ENCODE measurements at regions of chr7 and their contacts with region 1.

Region 1: DNA sequence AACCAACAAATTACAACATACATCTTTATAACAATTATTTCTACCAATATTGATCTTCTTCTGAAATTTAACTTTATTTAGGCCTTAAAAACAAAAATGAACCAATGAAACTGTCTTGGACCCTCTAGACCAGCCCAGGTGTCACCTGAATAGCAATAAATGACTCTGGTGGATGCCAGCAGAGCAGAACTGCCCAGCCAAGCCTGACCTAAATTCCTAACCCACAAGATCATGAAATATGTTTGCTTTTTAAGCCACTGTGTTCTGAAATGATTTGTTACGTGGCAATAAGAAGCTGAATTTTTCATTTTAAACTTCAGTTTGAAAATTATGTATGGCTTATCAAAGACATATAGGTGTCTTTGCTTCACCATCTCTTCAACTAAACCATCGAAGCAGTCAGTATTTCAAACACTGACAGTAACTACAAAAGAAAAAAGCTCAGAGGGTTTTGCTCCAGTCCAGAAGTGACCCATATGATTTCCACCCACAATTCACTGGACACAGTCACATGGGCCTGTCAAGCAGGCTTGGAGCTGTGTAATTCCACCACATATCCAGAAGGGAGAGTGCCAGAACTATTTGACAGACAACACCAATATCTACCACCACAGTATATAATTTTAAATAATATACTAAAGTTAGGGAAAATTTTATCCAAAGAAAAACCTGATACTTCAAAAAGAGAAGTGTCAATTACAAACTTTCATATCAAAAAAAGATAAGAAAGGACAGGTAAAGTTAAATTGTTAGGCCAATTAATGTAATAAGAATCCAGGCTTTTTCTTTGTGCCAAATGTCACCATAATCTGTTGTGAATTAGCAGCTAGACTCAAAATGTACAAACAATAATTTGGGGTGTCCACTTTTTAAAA is 94.5 kb downstream of the KMT2C start:
- DNase-seq: peak; percentile 67
- ATAC-seq: peak; percentile 94
- H3K4me3 ChIP-seq: no peak overlapping the region
- H3K27ac ChIP-seq: no peak overlapping the region
- H3K4me1 ChIP-seq: no peaks in the 10 kb centered on the region; the same call in 1 of the 2 replicates
- H3K27me3 ChIP-seq: no peaks in the 10 kb centered on the region
- CTCF ChIP-seq: peak; percentile 66

Region 2: GRCh38 chr7:151793531-151793951 is 547.7 kb before region 1 on chr7:
- CTCF ChIA-PET with region 1: no interaction called
- POLR2A ChIA-PET with region 1: no interaction called
- intact Hi-C with region 1: no loop called
- DNase-seq: peak; percentile 11
- ATAC-seq: no peak
- H3K4me3 ChIP-seq: no peak overlapping the region
- H3K27ac ChIP-seq: no peak overlapping the region
- H3K4me1 ChIP-seq: peaks cover 42% of the 10 kb centered on the region
- H3K27me3 ChIP-seq: no peaks in the 10 kb centered on the region
- CTCF ChIP-seq: no peak

Region 3: DNA sequence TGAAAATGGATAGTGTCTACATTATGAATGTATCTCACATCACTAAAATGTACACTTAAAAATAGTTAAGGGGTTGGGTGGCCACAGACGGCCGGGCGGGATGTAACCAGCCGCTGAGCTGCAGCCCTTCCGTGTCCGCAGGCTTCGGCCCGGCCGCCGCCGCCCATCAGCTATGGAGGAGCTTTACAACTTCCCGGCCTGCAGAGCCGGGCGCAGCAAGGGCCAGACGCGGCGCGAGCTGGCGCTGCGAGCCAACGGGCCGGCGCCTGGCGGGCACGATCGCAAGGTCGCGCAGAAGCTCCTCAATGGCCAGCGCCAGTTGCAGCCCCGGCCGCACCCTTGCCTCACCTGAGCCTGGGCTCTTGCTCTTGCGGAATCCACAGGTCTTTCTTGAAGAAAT is 25.4 kb after region 1 on chr7:
- CTCF ChIA-PET with region 1: no interaction called
- POLR2A ChIA-PET with region 1: no interaction called
- intact Hi-C with region 1: no loop called
- DNase-seq: no peak
- ATAC-seq: no peak
- H3K4me3 ChIP-seq: no peak overlapping the region
- H3K27ac ChIP-seq: no peak overlapping the region
- H3K4me1 ChIP-seq: no peaks in the 10 kb centered on the region
- H3K27me3 ChIP-seq: no peaks in the 10 kb centered on the region
- CTCF ChIP-seq: no peak

Region 4: GRCh38 chr7:152436111-152436930 is 95.0 kb after region 1 on chr7:
- CTCF ChIA-PET with region 1: interaction called, 3 read pairs
- POLR2A ChIA-PET with region 1: no interaction called
- intact Hi-C with region 1: loop called (anchors 1 kb)
- DNase-seq: peak; percentile 89
- ATAC-seq: peak; percentile 62
- H3K4me3 ChIP-seq: peak overlapping the region; percentile 74
- H3K27ac ChIP-seq: peak overlapping the region; percentile 46; the same call in 1 of the 2 replicates
- H3K4me1 ChIP-seq: no peaks in the 10 kb centered on the region; the same call in 1 of the 2 replicates
- H3K27me3 ChIP-seq: no peaks in the 10 kb centered on the region
- CTCF ChIP-seq: no peak

Region 5: DNA sequence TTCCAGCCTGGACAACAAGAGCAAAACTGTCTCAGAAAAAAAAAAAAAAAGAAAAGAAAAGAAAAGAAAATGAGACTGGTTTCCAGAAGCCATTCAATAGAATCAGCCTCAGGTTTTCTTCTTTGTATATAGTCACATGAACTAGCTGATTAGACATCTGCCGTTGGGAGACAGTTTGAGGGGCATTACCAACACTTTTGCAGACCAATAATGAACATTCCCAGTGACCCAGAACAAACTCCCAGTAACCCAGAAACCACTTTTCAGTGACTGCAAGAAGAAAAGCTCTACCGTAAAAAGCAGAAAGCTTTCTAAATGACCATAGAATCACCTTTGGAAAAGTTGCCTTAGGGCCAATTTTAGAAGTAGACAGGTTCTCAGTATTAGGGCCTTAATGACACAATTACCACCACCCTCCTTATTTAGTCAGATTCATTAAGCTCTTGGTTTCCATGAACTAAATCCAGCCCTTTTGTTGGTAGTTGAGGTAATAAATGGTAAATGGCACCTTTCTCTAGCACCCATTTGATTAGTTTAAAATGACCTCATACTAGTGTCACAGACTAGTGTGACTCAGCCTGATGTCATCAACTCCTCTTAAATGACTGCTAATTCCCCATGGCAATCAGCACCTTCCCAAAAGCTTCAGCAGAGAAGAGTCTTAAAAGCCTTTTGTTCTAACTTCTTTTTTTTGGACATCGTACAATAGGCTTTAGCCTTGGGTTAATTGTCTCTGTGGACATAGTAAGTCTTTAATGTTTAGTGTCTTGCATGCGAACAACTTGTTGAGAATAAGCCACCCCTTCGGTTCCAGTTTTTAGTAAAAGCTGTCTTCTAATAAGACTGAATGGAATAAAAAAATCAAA is 368.2 kb after region 1 on chr7:
- CTCF ChIA-PET with region 1: interaction called, 3 read pairs
- POLR2A ChIA-PET with region 1: no interaction called
- intact Hi-C with region 1: loop called (anchors 1 kb)
- DNase-seq: peak; percentile 44
- ATAC-seq: no peak
- H3K4me3 ChIP-seq: no peak overlapping the region
- H3K27ac ChIP-seq: no peak overlapping the region
- H3K4me1 ChIP-seq: peaks cover 21% of the 10 kb centered on the region
- H3K27me3 ChIP-seq: no peaks in the 10 kb centered on the region
- CTCF ChIP-seq: no peak

Measured in PC-3 (cell line).